ENCODE measurements at regions of chr9 and their contacts with region 1.

Region 1: GRCh38 chr9:34611829-34612630 is at the start of gene RPP25L:
- DNase-seq: peak; percentile 81
- H3K4me3 Mint-ChIP-seq: peak within 1 kb of the TSS; percentile 90
- H3K27ac Mint-ChIP-seq: peak within 1 kb of the TSS; percentile 93
- H3K4me1 Mint-ChIP-seq: peaks cover 11% of the 10 kb centered on the region
- H3K27me3 Mint-ChIP-seq: no peaks in the 10 kb centered on the region
- total RNA-seq, gene RPP25L: 33.7 and 35.0 TPM in 2 replicates

Region 2: GRCh38 chr9:34328987-34329832 is 282.8 kb before region 1 on chr9 and contains the starts of genes KIF24 and NUDT2:
- intact Hi-C with region 1: loop called (anchors 5 kb)
- DNase-seq: peak; percentile 97
- H3K4me3 Mint-ChIP-seq: peak within 1 kb of the TSS; percentile 98
- H3K27ac Mint-ChIP-seq: peak within 1 kb of the TSS; percentile 94
- H3K4me1 Mint-ChIP-seq: peaks cover 34% of the 10 kb centered on the region
- H3K27me3 Mint-ChIP-seq: no peaks in the 10 kb centered on the region
- total RNA-seq, gene KIF24: 4.8 and 5.0 TPM in 2 replicates
- total RNA-seq, gene NUDT2: 30.8 and 33.0 TPM in 2 replicates

Region 3: DNA sequence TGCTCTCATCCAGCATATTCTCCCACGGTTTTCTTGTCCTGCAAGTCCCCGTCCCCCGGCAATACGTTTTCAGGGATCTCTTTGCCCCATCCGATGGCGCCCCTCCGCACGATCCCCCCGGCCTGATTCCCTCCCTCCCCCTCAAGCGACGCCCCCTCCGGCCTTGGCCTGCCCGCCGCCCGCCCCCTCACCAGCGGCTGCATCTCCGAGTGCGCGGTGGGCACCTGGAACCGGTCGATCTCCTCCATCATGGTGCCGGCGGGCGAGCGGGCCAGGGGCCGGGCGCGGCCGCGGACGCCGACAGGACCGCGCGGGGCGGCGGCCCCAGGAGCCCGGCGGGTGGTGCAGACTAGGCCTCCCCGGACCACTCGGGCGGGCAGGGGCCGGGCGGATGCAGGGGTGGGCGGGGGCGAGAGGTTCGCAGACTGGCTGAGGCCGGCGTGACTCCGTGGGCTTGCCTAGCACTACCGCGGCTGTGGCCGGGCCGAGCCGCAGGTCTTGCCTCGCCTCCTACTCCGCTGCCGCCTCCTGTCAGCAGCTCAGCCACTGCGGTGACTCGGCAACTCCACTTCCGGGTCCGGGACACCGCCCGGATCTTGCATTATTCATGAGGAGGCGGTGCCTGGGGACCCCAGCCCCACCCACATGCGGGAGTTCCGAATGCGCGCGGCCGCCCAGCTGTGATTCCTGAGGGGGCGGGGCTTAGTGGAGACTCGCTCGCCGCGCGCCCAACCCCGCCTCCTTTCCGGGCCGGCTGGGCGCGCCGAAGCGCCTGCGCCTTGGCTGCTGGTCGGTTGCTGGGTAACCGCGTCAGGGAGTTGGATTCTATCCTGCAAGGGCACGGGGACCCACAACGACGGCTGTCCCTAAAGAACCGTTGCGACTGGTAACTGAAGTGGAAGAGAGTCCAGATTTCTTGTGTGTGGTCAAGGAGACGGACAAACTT is 153.7 kb before region 1 on chr9 and contains the starts of genes DNAI1 and FAM219A:
- intact Hi-C with region 1: loop called (anchors 5 kb)
- DNase-seq: peak; percentile 99
- H3K4me3 Mint-ChIP-seq: peak within 1 kb of the TSS; percentile 88
- H3K27ac Mint-ChIP-seq: peak within 1 kb of the TSS; percentile 60
- H3K4me1 Mint-ChIP-seq: peaks cover 43% of the 10 kb centered on the region
- H3K27me3 Mint-ChIP-seq: peaks cover 17% of the 10 kb centered on the region
- total RNA-seq, gene DNAI1: not detected in 2 replicates
- total RNA-seq, gene FAM219A: 17.3 and 19.7 TPM in 2 replicates

Region 4: GRCh38 chr9:34637356-34638137 is 25.5 kb after region 1 on chr9 and contains the start of gene SIGMAR1:
- intact Hi-C with region 1: loop called (anchors 1 kb)
- DNase-seq: peak; percentile 93
- H3K4me3 Mint-ChIP-seq: peak within 1 kb of the TSS; percentile 97
- H3K27ac Mint-ChIP-seq: peak within 1 kb of the TSS; percentile 86
- H3K4me1 Mint-ChIP-seq: peaks cover 31% of the 10 kb centered on the region
- H3K27me3 Mint-ChIP-seq: no peaks in the 10 kb centered on the region
- total RNA-seq, gene SIGMAR1: 105 and 109 TPM in 2 replicates

Region 5: GRCh38 chr9:34646211-34647083 is 34.4 kb after region 1 on chr9 and contains the start of gene GALT:
- intact Hi-C with region 1: loop called (anchors 5 kb)
- DNase-seq: peak; percentile 95
- H3K4me3 Mint-ChIP-seq: peak within 1 kb of the TSS; percentile 93
- H3K27ac Mint-ChIP-seq: peak within 1 kb of the TSS; percentile 87
- H3K4me1 Mint-ChIP-seq: peaks cover 28% of the 10 kb centered on the region
- H3K27me3 Mint-ChIP-seq: no peaks in the 10 kb centered on the region
- total RNA-seq, gene GALT: 74.3 and 78.4 TPM in 2 replicates

Region 6: DNA sequence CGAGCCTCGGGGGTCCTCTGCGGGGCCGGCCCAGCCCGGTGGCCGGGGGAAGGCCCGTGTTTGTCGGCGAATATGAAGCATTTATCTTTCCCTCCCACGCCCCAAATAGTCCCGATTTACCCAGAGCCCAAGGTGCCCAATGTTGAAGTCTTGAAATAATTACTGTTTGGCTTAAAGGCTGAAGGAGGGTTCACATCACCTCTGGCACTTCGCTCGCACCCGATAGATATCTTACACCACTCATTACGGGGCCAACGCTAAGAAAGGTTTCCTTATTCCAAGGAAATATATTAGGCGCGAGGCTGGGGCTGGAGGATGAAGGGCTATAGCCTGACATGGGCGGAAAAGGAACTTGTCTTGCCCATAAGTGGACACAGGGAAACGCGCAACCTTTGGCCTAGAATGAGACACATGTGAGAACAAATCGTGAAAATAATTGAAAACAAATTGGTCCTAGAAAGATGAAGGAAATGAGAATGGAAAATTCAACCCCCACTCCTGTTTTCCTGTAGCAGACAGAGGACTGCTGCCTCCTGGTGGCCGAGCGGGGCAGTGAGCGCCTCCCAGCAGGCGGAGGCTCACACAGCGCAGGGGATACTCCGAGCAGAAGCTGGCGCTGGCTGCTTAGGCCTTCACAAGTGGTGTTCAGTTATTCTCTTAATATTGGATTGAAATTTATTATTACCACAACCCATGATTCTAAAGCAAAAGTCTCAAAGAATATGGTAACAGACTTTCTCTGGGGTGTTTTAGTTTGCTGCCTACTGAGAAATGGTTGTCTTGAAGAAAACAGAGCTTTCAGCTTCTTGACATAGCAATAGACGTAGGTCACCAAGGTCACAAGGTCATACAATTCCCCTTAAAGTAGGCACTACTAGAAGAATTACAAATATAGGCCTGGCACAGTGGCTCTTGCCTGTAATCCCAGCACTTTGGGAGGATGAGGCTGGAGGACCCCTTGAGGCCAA is 90.0 kb after region 1 on chr9:
- intact Hi-C with region 1: loop called (anchors 1 kb)
- DNase-seq: peak; percentile 69
- H3K4me3 Mint-ChIP-seq: peak overlapping the region; percentile 79
- H3K27ac Mint-ChIP-seq: peak overlapping the region; percentile 29
- H3K4me1 Mint-ChIP-seq: peaks cover 5% of the 10 kb centered on the region
- H3K27me3 Mint-ChIP-seq: peaks cover 19% of the 10 kb centered on the region

Region 7: GRCh38 chr9:34964458-34964857 is 352.4 kb after region 1 on chr9:
- intact Hi-C with region 1: no loop called
- DNase-seq: no peak
- H3K4me3 Mint-ChIP-seq: no peak overlapping the region
- H3K27ac Mint-ChIP-seq: no peak overlapping the region
- H3K4me1 Mint-ChIP-seq: peaks cover 24% of the 10 kb centered on the region
- H3K27me3 Mint-ChIP-seq: peaks cover 52% of the 10 kb centered on the region